H1 (cell line): ENCODE measurements at regions of chr22 and their contacts with region 1.

Region 1: GRCh38 chr22:29480512-29481264 is 670 bp downstream of the NEFH start:
- DNase-seq: peak in 1 of 2 experiments; percentile 81
- H3K4me3 ChIP-seq: peak overlapping the region; percentile 26 to 57 (median 32)
- H3K27ac ChIP-seq: no peak overlapping the region
- H3K4me1 ChIP-seq: peaks cover 14 to 27% (median 20%) of the 10 kb centered on the region in 4 experiments
- H3K27me3 ChIP-seq: peaks cover 26 to 58% (median 51%) of the 10 kb centered on the region in 4 experiments
- CTCF ChIP-seq: peak; percentile 26 to 46 (median 40)
- EP300 ChIP-seq: no peak
- POLR2A ChIP-seq: no peak
- RAD21 ChIP-seq: peak; percentile 35 to 53

Region 2: GRCh38 chr22:29225422-29226131 is 255.1 kb before region 1 on chr22:
- CTCF ChIA-PET with region 1: no interaction called
- POLR2A ChIA-PET with region 1: no interaction called
- DNase-seq: no peak
- H3K4me3 ChIP-seq: no peak overlapping the region
- H3K27ac ChIP-seq: no peak overlapping the region
- H3K4me1 ChIP-seq: peaks cover 0 to 4% (median under 1%) of the 10 kb centered on the region in 4 experiments; a peak in 4 of 7 replicates
- H3K27me3 ChIP-seq: peaks cover 0 to 5% (median 0%) of the 10 kb centered on the region in 4 experiments; a peak in 2 of 7 replicates
- CTCF ChIP-seq: no peak
- EP300 ChIP-seq: no peak
- POLR2A ChIP-seq: no peak
- RAD21 ChIP-seq: no peak

Region 3: GRCh38 chr22:29470159-29470855 is 10.4 kb before region 1 on chr22:
- CTCF ChIA-PET with region 1: interaction called, 42 read pairs
- POLR2A ChIA-PET with region 1: interaction called, 36 read pairs
- DNase-seq: peak; percentile 81 to 99
- H3K4me3 ChIP-seq: peak overlapping the region; percentile 38 to 69 (median 50)
- H3K27ac ChIP-seq: no peak overlapping the region
- H3K4me1 ChIP-seq: peaks cover 0 to 6% (median 3%) of the 10 kb centered on the region in 4 experiments; a peak in 3 of 7 replicates
- H3K27me3 ChIP-seq: peaks cover 0 to 4% (median 2%) of the 10 kb centered on the region in 4 experiments; a peak in 3 of 7 replicates
- CTCF ChIP-seq: peak; percentile 90 to 98 (median 97)
- EP300 ChIP-seq: peak in 1 of 2 experiments; percentile 85; a peak in 2 of 3 replicates
- POLR2A ChIP-seq: 0 out of 3 replicates have a peak, but pooled peaks of 1 of the 2 experiments have one; percentile 27
- RAD21 ChIP-seq: peak; percentile 57 to 72

Region 4: DNA sequence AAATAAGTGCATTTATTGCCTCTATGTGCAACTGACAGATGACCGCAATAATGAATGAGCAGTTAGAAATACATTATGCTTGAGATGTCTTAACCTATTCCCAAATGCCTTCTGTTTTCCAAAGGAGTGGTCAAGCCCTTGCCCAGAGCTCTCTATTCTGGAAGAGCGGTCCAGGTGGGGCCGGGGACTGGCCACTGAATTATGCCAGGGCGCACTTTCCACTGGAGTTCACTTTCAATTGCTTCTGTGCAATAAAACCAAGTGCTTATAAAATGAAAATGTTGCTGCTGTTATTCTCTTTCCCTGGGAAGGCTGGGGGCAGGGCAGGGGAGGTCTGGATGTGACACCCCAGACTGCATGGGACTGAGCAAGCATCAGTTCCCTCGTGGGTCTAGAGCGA is 10.3 kb after region 1 on chr22:
- CTCF ChIA-PET with region 1: interaction called, 5 read pairs
- POLR2A ChIA-PET with region 1: interaction called, 11 read pairs
- DNase-seq: no peak
- H3K4me3 ChIP-seq: no peak overlapping the region
- H3K27ac ChIP-seq: no peak overlapping the region
- H3K4me1 ChIP-seq: no peaks in the 10 kb centered on the region
- H3K27me3 ChIP-seq: no peaks in the 10 kb centered on the region
- CTCF ChIP-seq: no peak
- EP300 ChIP-seq: no peak
- POLR2A ChIP-seq: no peak
- RAD21 ChIP-seq: no peak

Region 5: DNA sequence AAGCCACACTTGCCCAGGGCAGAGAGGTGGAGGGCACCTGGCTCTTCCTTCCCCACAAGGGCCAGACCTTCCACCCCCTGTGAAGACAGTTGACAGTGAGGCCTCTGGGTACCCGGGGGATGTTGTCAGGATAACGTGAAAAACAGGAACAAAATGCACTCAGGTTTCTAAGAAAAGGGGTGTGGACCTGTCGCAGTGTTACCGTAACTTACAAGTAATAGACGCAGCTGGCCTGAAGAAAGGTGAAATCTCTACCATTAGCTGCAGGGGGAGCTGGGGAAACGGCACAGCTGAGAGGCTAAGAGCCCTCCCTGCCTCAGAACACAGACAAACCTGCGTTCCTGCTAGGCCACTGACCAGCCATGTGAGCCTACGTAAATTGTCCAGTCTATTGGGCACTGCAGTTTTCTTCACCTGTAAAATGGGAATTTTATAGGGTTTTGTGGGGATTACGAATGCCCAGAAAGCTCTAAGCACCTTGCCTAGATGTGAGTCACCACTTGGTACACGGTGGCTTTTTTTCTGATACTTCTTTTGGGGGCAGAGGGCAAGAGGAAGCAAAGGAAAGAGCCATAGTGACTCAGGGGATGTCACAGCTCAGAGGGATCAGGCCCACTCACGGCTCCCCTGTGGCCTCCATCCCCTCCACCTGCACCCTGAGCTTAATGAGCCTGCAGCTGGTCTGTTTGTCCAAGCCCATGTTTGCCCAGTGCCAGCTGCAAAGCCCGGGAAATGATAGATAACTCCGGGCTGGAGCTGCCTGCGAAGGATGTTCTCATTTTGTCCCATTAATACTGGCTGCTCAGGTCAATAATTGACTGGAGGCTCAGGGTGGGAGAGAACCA is 220.7 kb after region 1 on chr22:
- CTCF ChIA-PET with region 1: no interaction called
- POLR2A ChIA-PET with region 1: no interaction called
- DNase-seq: no peak
- H3K4me3 ChIP-seq: no peak overlapping the region
- H3K27ac ChIP-seq: no peak overlapping the region
- H3K4me1 ChIP-seq: peaks cover 9 to 53% (median 45%) of the 10 kb centered on the region in 4 experiments
- H3K27me3 ChIP-seq: peaks cover 0 to 30% (median 12%) of the 10 kb centered on the region in 4 experiments; a peak in 3 of 7 replicates
- CTCF ChIP-seq: peak; percentile 43 to 68 (median 54)
- EP300 ChIP-seq: no peak
- POLR2A ChIP-seq: no peak
- RAD21 ChIP-seq: peak; percentile 59 to 68